Transverse colon (tissue), 4 donors: ENCODE measurements at regions of chr11 and their contacts with region 1.

Region 1: DNA sequence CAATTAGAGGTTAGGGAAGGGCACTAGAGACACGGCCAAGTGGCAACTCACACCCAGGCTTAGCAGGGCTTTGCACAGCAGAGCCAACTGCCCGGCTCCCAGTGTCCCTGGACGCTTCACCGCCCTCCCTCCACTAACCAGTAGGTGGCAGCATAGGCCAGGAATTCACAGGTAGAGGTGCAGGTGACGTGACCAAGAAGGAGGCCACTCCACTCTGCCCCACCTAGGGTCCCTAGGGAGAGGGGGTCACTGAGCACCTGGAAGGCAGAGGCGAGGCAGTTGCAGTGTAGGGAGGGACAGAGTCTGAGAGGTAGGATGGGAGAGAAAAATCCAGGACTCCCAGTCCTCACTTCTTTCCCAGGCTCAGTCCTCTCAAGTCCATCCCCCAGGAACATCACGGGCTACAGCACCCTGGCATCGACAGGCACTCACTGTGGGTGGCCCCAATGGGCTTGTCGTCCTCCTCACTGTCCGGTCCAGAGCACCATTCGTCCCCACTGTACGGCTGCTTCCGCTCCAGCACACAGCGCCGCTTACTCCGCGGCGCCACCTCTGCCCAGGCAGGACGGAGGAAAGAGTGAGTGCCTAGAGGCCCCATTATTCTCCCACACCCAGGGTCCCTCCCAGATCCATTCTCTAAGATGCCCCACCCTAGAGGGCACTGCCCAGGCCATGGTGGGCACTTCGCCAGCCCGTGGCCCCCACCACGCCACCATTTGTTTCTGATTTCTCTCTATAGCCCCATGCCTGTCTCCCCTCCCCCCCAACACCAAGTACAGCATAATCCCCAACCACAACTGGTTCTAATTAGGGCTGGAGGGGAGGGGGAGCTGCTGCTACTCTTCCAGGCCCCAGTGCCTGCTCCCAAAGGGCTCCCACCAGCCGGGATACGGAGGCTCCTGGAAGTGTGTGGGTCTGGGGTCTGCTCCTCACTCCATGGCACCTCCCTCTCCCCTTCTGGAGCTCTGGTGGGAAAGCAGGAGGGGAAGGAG is 18.4 kb downstream of the BCL9L start:
- DNase-seq: peak; percentile 93
- H3K4me3 ChIP-seq: no peak overlapping the region
- H3K27ac ChIP-seq: peak overlapping the region; percentile 98 to 100 (median 100)
- H3K4me1 ChIP-seq: peaks cover 27 to 55% (median 46%) of the 10 kb centered on the region in 4 donors
- H3K27me3 ChIP-seq: no peaks in the 10 kb centered on the region
- CTCF ChIP-seq: peak; percentile 90 to 99 (median 94)
- EP300 ChIP-seq: no peak
- POLR2A ChIP-seq: no peak

Region 2: GRCh38 chr11:118928108-118928870 is 20.9 kb after region 1 on chr11:
- in situ Hi-C with region 1: no loop called
- intact Hi-C with region 1: loop called (anchors 2 kb)
- DNase-seq: peak; percentile 95
- H3K4me3 ChIP-seq: peak overlapping the region; percentile 79 to 94 (median 86)
- H3K27ac ChIP-seq: peak overlapping the region; percentile 98 to 100 (median 100)
- H3K4me1 ChIP-seq: peaks cover 12 to 48% (median 39%) of the 10 kb centered on the region in 4 donors
- H3K27me3 ChIP-seq: no peaks in the 10 kb centered on the region
- CTCF ChIP-seq: peak; percentile 86 to 99 (median 91)
- EP300 ChIP-seq: no peak
- POLR2A ChIP-seq: peak; percentile 75

Region 3: GRCh38 chr11:118956094-118956846 is 48.9 kb after region 1 on chr11 and contains the start of gene UPK2:
- in situ Hi-C with region 1: loop called in 2 of 4 experiments (anchors 10 kb)
- intact Hi-C with region 1: loop called (anchors 1 kb)
- DNase-seq: peak; percentile 91
- H3K4me3 ChIP-seq: no peak within 1 kb of the TSS
- H3K27ac ChIP-seq: no peak within 1 kb of the TSS
- H3K4me1 ChIP-seq: peaks cover 0 to under 1% (median 0%) of the 10 kb centered on the region in 4 donors
- H3K27me3 ChIP-seq: peaks cover 15% of the 10 kb centered on the region
- CTCF ChIP-seq: peak; percentile 91 to 97 (median 95)
- EP300 ChIP-seq: no peak
- POLR2A ChIP-seq: no peak
- total RNA-seq, gene UPK2: not detected